A549 (cell line): ENCODE measurements at regions of chr7 and their contacts with region 1.

Region 1: DNA sequence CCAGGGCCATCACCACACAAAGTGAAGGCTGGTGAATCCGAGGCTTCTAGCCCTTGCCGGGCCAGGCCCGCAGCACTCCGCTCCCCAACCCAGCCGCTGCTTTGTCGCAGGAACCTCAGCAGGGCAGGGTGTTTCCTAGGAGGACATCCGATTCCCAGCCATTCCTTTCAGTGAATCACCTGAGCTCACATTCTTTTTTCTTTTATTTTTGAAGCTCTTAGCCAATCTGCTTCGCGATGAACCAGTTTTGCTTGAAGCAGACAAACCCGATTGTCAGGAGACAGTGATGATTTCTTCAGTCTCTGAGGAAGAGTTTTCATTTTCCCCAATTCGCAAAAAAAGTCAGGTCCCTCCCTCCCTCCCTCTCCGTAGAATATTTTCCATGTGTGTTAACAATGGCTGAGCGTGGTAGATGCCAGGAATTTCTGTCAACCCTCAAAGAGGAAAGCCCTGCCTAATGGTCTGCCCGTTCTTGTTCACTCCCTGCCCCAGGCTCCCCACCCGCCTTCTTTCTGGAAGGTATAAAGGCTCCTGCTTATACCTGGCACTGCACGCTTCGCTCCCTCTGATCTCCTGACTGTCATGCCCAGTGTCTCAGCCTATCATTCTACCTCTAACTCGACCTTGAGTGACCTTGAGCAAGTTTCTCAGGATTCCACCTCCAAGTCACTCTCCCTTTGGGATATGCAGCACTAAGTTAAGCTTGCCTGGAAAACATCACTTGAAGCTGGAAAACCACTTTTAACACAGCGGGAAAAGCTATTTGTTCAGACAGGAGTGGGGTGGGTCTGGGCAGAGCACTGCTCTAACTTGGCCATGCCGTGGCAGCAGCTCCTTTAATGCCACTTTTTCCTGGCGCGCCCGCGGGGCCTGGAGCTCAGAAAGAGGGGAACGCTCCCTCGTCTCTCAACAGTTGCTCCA is 35.1 kb downstream of the EGFR start:
- DNase-seq: no peak
- ATAC-seq: no peak
- H3K4me3 ChIP-seq: no peak overlapping the region
- H3K27ac ChIP-seq: peak overlapping the region; percentile 85 to 92
- H3K4me1 ChIP-seq: peaks cover 93% of the 10 kb centered on the region
- CTCF ChIP-seq: no peak
- EP300 ChIP-seq: no peak
- POLR2A ChIP-seq: no peak
- RAD21 ChIP-seq: no peak

Region 2: DNA sequence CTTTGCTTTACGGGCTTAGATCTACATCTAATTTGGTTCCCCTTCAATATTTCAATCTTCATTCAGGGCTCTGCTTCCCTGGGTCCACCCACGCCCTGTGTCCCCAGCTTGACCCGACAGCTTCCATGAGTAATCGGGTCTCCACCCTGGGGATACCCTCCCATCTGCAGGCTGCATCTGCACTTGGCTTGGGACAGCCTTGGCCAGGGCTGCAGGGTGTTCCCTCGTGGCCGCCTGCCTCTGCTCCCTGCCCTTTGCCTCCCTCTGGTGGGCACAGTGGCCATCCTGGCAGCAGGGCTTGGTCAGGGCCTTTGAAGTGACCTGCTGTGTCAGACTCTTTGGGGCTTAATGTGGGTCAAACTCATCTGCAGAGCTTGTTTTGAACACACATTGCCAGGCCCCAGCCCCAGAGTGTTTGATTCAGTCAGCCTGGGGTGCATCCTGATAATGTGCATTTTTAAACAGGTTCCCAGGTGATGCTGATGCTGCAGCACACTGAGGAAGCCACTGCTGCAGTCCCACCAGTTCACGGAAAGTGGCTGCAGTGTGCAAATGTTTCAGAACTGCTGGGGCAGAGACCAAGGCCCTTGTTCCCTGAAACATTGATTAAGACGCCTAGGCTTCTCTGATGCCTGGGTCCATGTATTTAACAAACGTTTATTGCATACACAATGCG is 214.2 kb before region 1 on chr7:
- CTCF ChIA-PET with region 1: interaction called, 26 read pairs
- POLR2A ChIA-PET with region 1: no interaction called
- DNase-seq: peak; percentile 80 to 81
- ATAC-seq: peak; percentile 99
- H3K4me3 ChIP-seq: no peak overlapping the region
- H3K27ac ChIP-seq: peak overlapping the region; percentile 65 to 71
- H3K4me1 ChIP-seq: peaks cover 52% of the 10 kb centered on the region
- CTCF ChIP-seq: peak; percentile 83
- EP300 ChIP-seq: no peak
- POLR2A ChIP-seq: no peak
- RAD21 ChIP-seq: peak; percentile 94 to 97

Region 3: DNA sequence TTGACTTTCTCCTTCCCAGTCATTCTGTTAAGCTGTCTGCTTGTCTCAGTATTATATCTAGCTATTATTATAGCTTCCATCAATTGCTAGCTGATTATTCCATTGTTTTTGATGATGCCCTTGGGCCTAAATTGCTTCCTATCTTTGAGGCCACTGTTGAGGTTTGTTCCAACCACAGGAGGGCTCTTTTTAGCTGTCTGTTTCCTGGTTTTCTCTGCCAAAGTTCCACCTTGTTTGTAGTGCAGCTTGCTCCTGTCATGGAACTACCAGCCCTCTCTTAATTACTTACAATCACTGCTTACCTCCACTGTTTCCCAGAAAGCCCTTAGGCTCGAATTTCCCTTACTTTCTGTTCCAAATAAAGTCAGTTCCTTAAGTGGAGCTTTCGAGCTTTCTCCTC is 176.2 kb before region 1 on chr7:
- CTCF ChIA-PET with region 1: interaction called, 14 read pairs
- POLR2A ChIA-PET with region 1: no interaction called
- DNase-seq: peak in 1 of 2 experiments; percentile 55
- ATAC-seq: peak in 1 of 2 experiments; percentile 36; a peak in 1 of 6 replicates
- H3K4me3 ChIP-seq: no peak overlapping the region
- H3K27ac ChIP-seq: peak overlapping the region; percentile 94 to 99
- H3K4me1 ChIP-seq: peaks cover 69% of the 10 kb centered on the region
- CTCF ChIP-seq: peak; percentile 34; the same call in 2 of the 3 replicates
- EP300 ChIP-seq: no peak
- POLR2A ChIP-seq: no peak
- RAD21 ChIP-seq: peak; percentile 53 to 57

Region 4: DNA sequence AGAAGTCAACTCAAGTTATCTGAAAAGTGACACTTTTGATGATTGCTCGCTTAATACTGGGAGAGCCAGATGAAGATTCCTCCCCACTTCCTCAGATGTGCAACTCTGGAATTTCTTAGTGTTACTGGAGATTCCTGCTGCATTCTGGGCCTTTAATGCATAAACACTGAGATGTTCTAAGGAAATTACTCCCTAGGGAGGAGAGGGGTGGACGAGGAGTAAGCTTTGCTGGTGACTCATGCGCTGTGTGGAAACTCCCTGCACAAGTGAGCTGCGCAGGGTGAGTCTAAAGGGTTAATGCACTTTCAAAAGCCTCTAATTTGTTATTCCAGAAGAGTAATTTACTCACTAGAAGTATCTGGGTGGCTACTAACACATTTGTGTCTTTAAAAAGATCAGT is 11.2 kb after region 1 on chr7:
- CTCF ChIA-PET with region 1: interaction called, 22 read pairs
- POLR2A ChIA-PET with region 1: interaction called, 4 read pairs
- DNase-seq: peak; percentile 84 to 93
- ATAC-seq: peak; percentile 88 to 89
- H3K4me3 ChIP-seq: no peak overlapping the region
- H3K27ac ChIP-seq: peak overlapping the region; percentile 84 to 92
- H3K4me1 ChIP-seq: peaks cover 98% of the 10 kb centered on the region
- CTCF ChIP-seq: no peak
- EP300 ChIP-seq: peak in 1 of 2 experiments; percentile 72; a peak in 1 of 5 replicates
- POLR2A ChIP-seq: no peak
- RAD21 ChIP-seq: no peak; a peak in 1 of 5 replicates

Region 5: GRCh38 chr7:55280031-55280454 is 226.1 kb after region 1 on chr7:
- CTCF ChIA-PET with region 1: no interaction called
- POLR2A ChIA-PET with region 1: no interaction called
- DNase-seq: peak; percentile 67 to 73
- ATAC-seq: peak; percentile 90 to 97
- H3K4me3 ChIP-seq: no peak overlapping the region
- H3K27ac ChIP-seq: no peak overlapping the region
- H3K4me1 ChIP-seq: no peaks in the 10 kb centered on the region
- CTCF ChIP-seq: peak; percentile 78
- EP300 ChIP-seq: no peak
- POLR2A ChIP-seq: no peak
- RAD21 ChIP-seq: peak; percentile 88 to 92